Caco-2 (cell line): ENCODE measurements at regions of chr15 and their contacts with region 1.

Region 1: DNA sequence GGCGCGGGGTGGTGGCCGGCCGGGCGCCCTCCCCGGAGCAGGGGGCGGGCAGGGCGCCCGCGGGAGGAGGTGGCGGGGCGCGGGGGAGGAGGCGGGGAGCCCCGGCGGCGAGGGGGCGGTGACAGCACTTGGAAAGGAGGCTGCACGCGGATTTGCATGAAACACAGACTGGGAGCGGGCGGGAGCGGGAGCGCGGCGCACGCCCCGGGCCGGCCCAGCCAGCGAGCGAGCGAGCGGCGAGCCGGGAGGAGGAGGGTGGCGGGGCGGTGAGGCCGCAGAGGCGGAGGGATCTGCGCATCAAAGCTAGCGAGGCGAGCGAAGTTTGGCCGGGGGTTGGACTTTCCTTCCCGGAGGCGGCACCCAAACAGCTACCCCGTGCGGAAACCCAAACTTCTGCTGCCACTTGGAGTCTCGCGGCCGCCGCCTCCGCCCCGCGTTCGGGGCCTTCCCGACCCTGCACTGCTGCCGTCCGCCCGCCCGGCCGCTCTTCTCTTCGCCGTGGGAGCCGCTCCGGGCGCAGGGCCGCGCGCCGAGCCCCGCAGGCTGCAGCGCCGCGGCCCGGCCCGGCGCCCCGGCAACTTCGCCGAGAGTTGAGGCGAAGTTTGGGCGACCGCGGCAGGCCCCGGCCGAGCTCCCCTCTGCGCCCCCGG is at the start of gene SMAD3:
- DNase-seq: peak; percentile 92 to 93
- H3K4me3 ChIP-seq: peak within 1 kb of the TSS; percentile 89
- H3K4me3 Mint-ChIP-seq: peak within 1 kb of the TSS; percentile 96
- H3K27ac Mint-ChIP-seq: peak within 1 kb of the TSS; percentile 88
- H3K4me1 ChIP-seq: peaks cover 47% of the 10 kb centered on the region
- H3K4me1 Mint-ChIP-seq: peaks cover 39% of the 10 kb centered on the region
- H3K27me3 ChIP-seq: no peaks in the 10 kb centered on the region
- H3K27me3 Mint-ChIP-seq: no peaks in the 10 kb centered on the region
- CTCF ChIP-seq: no peak
- total RNA-seq, gene SMAD3: 51.5 and 54.8 TPM in 2 replicates

Region 2: GRCh38 chr15:66946578-66947164 is 118.9 kb before region 1 on chr15:
- CTCF ChIA-PET with region 1: interaction called, 9 read pairs
- POLR2A ChIA-PET with region 1: no interaction called
- intact Hi-C with region 1: loop called (anchors 1 kb)
- DNase-seq: peak; percentile 62 to 75
- H3K4me3 ChIP-seq: no peak overlapping the region
- H3K4me3 Mint-ChIP-seq: no peak overlapping the region
- H3K27ac Mint-ChIP-seq: no peak overlapping the region
- H3K4me1 ChIP-seq: no peaks in the 10 kb centered on the region
- H3K4me1 Mint-ChIP-seq: no peaks in the 10 kb centered on the region
- H3K27me3 ChIP-seq: no peaks in the 10 kb centered on the region
- H3K27me3 Mint-ChIP-seq: no peaks in the 10 kb centered on the region
- CTCF ChIP-seq: peak; percentile 89 to 90

Region 3: GRCh38 chr15:67048281-67049279 is 17.0 kb before region 1 on chr15:
- CTCF ChIA-PET with region 1: interaction called, 7 read pairs
- POLR2A ChIA-PET with region 1: interaction called, 13 read pairs
- intact Hi-C with region 1: loop called (anchors 1 kb)
- DNase-seq: peak; percentile 86 to 91
- H3K4me3 ChIP-seq: no peak overlapping the region
- H3K4me3 Mint-ChIP-seq: peak overlapping the region; percentile 44
- H3K27ac Mint-ChIP-seq: peak overlapping the region; percentile 92
- H3K4me1 ChIP-seq: peaks cover 59% of the 10 kb centered on the region
- H3K4me1 Mint-ChIP-seq: peaks cover 54% of the 10 kb centered on the region
- H3K27me3 ChIP-seq: no peaks in the 10 kb centered on the region
- H3K27me3 Mint-ChIP-seq: no peaks in the 10 kb centered on the region
- CTCF ChIP-seq: no peak

Region 4: DNA sequence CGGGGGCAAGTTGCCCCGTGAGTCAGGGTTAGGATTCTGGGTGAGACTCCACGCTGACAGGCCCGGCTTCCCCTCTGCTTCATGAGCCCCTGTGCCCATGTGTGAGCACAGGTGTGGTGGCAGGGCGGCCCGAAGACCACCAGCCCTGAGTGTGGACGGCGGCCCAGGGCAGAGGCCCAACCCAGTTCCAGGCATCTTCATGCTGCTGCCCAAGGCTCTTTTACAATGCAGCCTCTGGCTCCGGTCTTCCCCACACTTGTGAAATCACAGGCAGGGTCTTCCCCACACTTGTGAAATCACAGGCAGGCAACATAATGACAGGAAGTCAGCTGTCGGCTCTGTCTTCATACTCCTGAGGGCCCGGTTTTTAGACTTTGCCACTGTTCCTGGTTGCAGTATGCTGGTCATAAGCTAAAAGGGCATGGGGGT is 110.1 kb after region 1 on chr15:
- CTCF ChIA-PET with region 1: no interaction called
- POLR2A ChIA-PET with region 1: interaction called, 9 read pairs
- intact Hi-C with region 1: loop called (anchors 1 kb)
- DNase-seq: no peak
- H3K4me3 ChIP-seq: no peak overlapping the region
- H3K4me3 Mint-ChIP-seq: no peak overlapping the region
- H3K27ac Mint-ChIP-seq: peak overlapping the region; percentile 26
- H3K4me1 ChIP-seq: peaks cover 53% of the 10 kb centered on the region
- H3K4me1 Mint-ChIP-seq: peaks cover 51% of the 10 kb centered on the region
- H3K27me3 ChIP-seq: no peaks in the 10 kb centered on the region
- H3K27me3 Mint-ChIP-seq: no peaks in the 10 kb centered on the region
- CTCF ChIP-seq: no peak

Region 5: DNA sequence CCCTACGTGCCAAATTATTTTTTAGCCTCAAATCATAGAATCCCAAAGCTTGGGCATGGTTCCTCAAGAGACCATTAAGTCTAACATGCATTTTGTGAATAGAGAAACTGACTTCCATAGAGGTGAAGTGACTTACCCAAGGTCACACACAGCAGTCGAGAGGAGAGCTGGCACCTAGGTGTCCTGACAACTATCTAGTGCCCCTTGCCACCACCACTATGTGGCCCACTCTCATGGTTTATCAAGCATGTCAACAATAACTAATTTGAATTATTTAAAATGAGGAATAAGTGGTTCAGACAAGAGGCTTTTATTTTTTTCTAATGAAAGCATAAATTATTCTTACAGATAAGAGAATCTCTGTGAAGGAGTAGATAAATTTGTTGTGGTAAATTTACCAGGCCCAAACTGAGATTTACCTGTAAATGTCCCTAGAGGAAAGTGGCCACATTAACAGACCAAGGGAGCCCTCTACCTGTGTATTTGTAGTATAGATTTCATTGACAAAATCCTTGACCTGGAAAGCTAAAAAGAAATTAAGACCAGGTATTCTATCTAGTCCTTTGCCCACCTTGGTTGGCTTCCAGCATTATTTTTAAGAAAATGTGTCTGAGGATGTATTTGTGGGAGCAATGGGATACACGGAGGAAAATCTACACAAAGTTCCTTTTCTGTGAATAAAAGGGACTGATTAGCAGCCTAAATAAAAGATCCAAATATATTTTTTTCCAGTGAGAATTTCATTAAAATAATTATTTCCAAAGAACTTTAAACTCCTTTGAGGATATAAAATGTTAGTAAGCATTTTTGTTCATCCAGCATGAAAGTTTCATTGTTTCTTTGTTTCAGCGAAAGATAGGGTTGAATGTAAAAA is 238.2 kb after region 1 on chr15:
- CTCF ChIA-PET with region 1: interaction called, 5 read pairs
- POLR2A ChIA-PET with region 1: no interaction called
- intact Hi-C with region 1: loop called (anchors 5 kb)
- DNase-seq: peak; percentile 35 to 38
- H3K4me3 ChIP-seq: no peak overlapping the region
- H3K4me3 Mint-ChIP-seq: no peak overlapping the region
- H3K27ac Mint-ChIP-seq: no peak overlapping the region
- H3K4me1 ChIP-seq: no peaks in the 10 kb centered on the region
- H3K4me1 Mint-ChIP-seq: no peaks in the 10 kb centered on the region
- H3K27me3 ChIP-seq: no peaks in the 10 kb centered on the region
- H3K27me3 Mint-ChIP-seq: no peaks in the 10 kb centered on the region
- CTCF ChIP-seq: peak; percentile 41 to 66